ENCODE measurements at regions of chr6 and their contacts with region 1.

Region 1: GRCh38 chr6:123316733-123317323 is 319.9 kb downstream of the TRDN start:
- DNase-seq: no peak
- ATAC-seq: no peak

Region 2: GRCh38 chr6:122730775-122731386 is 585.9 kb before region 1 on chr6:
- intact Hi-C with region 1: loop called (anchors 10 kb)
- DNase-seq: no peak
- ATAC-seq: no peak

Region 3: GRCh38 chr6:122869437-122870024 is 447.3 kb before region 1 on chr6:
- intact Hi-C with region 1: loop called (anchors 5 kb)
- DNase-seq: no peak
- ATAC-seq: peak; percentile 69

Region 4: DNA sequence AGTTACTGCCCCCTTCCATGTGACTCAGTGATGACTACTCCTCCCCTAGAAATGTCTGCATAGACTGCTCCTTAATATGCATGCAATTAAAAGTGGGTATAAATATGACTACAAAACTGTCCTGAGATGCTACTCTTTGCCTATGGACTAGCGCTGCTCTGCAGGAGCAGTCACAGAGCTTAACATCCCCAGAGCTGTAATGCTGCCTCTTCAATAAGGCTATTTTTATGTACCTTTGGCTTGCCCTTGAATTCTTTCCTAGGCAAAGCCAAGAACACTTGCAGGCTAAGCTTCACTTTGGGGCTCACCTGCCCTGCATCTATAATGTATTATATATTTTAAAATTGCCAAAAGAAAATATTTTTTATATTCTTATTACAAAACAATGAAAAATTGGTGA is 21.6 kb before region 1 on chr6:
- intact Hi-C with region 1: no loop called
- DNase-seq: no peak
- ATAC-seq: no peak

Region 5: DNA sequence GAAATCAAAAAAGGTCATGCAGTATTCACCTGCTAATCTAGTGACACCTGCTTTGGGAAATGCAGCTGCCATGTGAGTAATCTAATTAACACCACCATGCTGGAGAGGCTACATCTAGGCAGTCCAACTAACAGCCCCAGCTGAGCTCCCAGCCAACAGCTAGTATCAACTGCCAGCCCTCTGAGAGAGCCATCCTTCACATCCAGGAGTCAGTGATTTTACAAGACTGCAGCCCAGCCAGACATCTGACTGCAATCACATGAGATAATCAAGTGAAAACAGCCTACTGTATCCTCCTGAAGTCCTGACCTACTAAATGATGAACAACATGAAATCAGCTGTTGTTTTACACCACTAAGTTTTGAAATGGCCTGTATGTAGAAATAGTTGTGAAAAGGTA is 21.6 kb after region 1 on chr6:
- intact Hi-C with region 1: no loop called
- DNase-seq: peak; percentile 37
- ATAC-seq: no peak

Region 6: DNA sequence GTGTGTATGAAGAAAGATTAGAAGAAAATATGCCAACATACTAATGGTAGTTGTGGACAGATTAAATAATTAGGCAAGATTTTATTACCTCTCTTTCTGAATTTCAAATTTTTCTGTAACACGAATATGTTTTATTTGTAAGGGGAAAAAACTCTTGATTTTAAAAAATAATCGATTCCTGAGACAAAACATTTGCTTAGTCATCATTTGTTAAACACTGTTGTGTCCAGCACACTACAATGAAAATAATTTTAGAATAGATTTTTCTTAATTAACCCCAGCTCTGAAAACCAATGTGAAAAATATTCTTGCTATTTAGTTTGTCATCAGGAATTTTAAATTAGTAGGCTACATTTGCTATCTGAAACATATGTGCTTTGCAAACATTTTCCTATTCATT is 66.9 kb after region 1 on chr6:
- intact Hi-C with region 1: no loop called
- DNase-seq: no peak
- ATAC-seq: no peak

Measured in Right ventricle myocardium inferior (tissue), 1 donor.